ENCODE measurements at regions of chr1 and their contacts with region 1.

Region 1: GRCh38 chr1:23691499-23692307 is at the start of gene RPL11:
- DNase-seq: peak; percentile 92
- ATAC-seq: peak; percentile 96
- H3K4me3 Mint-ChIP-seq: peak within 1 kb of the TSS; percentile 98
- H3K27ac Mint-ChIP-seq: peak within 1 kb of the TSS; percentile 92
- H3K4me1 Mint-ChIP-seq: peaks cover 47% of the 10 kb centered on the region
- H3K27me3 Mint-ChIP-seq: no peaks in the 10 kb centered on the region
- total RNA-seq, gene RPL11: 844 to 1,001 TPM

Region 2: GRCh38 chr1:23664837-23665795 is 26.6 kb before region 1 on chr1:
- CTCF ChIA-PET with region 1: interaction called, 13 read pairs
- DNase-seq: peak; percentile 48
- ATAC-seq: peak; percentile 71
- H3K4me3 Mint-ChIP-seq: no peak overlapping the region
- H3K27ac Mint-ChIP-seq: peak overlapping the region; percentile 34
- H3K4me1 Mint-ChIP-seq: peaks cover 10% of the 10 kb centered on the region
- H3K27me3 Mint-ChIP-seq: peaks cover 3% of the 10 kb centered on the region

Region 3: DNA sequence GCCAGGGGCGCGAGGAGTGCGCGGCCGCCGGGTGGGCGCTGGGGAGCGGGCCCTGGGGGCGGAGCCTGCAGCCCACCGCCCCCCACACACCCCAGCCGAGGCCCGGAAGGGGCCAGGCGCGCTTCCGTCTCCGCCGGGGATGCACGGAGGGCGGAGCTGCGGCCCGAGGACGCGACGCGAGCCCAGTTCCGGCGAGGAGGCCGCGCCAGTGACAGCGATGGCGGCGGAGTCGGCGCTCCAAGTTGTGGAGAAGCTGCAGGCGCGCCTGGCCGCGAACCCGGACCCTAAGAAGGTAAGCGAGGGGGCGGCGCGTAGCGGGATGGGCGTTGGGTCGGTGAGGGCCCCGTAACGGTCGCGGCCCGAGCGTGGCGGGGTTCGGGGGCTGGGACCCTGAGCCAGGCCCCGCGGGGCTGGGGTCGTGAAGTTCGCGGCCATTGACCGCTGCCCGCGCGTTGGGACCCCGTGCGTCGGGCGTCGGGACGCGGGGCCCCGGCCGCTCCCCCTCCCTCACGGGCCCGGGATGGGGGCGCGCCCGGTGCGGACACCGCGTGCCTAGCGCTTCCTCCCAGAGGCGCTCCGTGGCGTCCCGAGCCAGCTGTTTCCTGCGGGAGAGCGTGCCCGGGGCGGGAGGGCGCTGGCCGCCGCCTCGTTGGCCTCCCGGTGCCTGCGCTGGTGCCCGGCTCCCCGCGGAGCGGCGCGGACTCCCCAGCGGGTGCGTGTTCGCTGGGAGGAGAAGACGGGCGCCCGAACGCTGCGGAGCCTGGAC is 51.8 kb after region 1 on chr1 and contains the start of gene ELOA:
- CTCF ChIA-PET with region 1: interaction called, 23 read pairs
- DNase-seq: peak; percentile 87
- ATAC-seq: peak; percentile 95
- H3K4me3 Mint-ChIP-seq: peak within 1 kb of the TSS; percentile 85
- H3K27ac Mint-ChIP-seq: peak within 1 kb of the TSS; percentile 92
- H3K4me1 Mint-ChIP-seq: peaks cover 45% of the 10 kb centered on the region
- H3K27me3 Mint-ChIP-seq: no peaks in the 10 kb centered on the region
- total RNA-seq, gene ELOA: 30.1 to 40.7 TPM